Ascending aorta (tissue), 2 donors: ENCODE measurements at regions of chr12 and their contacts with region 1.

Region 1: DNA sequence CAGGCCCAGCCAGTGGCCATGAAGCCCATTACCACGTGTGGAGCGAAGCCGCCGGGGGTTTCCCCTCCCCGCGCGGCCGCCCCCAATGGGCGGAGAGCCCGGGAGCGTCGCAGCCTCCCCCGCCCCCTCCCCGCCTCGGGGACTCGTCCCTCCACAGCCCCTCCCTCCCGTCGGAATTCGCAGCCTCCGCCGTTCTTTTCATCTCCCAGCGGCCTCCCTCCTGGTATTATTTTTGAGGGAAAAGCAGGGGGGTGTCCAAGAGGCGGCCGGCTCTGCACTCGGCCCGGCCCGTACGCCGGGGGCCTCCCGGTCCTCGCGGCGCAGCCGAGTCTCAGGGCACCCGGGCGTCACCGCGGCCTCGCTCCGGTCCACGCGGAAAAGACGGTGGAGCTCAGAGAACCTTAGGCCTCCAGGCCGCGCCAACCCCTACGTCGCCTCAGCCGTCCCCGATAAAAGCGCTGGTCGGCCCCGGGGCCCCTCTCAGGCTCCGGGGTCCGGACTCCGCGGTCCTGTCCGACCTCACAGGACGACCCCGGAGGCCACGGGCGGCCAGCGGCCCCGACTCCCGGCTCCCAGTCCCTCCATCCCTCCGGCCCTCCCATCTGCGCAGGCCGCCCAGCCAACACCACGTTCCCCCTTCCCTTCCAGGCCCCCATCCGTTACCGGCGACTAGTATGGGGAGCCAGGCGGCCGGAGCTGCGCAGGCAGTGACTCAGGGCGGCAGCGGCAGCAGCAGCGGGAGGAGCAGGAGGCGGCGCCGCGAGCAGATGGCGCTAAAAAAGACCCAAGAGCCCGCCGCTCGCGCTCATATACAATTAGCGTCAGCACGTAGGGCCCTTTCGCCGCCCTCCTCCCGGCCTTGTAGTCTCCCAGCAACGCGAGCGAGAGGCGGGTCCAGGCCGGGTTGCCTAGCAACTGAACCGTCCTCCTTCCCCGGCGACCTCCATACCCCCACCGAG is at the start of gene NAP1L1:
- DNase-seq: peak; percentile 92 to 99
- H3K4me3 ChIP-seq: peak within 1 kb of the TSS; percentile 71 to 77
- H3K27ac ChIP-seq: peak within 1 kb of the TSS; percentile 99
- H3K4me1 ChIP-seq: peaks cover 7 to 18% of the 10 kb centered on the region in 2 donors
- H3K27me3 ChIP-seq: no peaks in the 10 kb centered on the region
- CTCF ChIP-seq: no peak
- total RNA-seq, gene NAP1L1: 116 TPM

Region 2: DNA sequence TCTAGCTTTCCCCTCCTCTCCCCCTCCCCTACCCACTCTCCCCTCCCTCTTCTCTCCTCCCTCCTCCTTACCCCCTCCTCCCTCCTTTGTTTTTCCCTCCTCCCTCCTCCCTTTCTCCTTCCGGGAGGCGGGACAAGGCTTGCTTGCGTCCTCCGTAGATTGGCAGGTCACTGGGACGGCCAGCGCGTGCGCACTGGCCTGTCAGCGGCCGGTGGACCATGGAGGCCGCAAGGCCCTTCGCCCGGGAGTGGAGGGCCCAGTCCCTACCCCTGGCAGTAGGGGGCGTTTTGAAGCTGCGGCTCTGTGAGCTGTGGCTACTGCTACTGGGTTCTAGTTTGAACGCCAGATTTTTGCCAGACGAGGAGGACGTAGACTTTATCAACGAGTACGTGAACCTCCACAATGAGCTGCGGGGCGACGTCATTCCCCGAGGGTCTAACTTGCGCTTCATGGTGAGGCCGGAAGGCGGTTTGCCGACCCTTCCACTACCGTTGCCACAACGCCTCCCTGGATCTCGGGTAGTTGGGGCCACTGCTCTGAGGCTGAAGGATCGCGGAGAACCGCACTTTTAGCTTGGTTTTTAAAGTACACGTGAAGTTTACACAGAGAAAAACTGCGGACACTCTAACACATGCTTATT is 693.2 kb before region 1 on chr12 and contains the start of gene GLIPR1L2:
- intact Hi-C with region 1: loop called (anchors 5 kb)
- DNase-seq: peak; percentile 89 to 98
- H3K4me3 ChIP-seq: peak within 1 kb of the TSS; percentile 63 to 76
- H3K27ac ChIP-seq: peak within 1 kb of the TSS; percentile 95 to 97
- H3K4me1 ChIP-seq: peaks cover 0 to 8% of the 10 kb centered on the region in 2 donors
- H3K27me3 ChIP-seq: no peaks in the 10 kb centered on the region
- CTCF ChIP-seq: peak; percentile 76 to 84 (median 79)
- total RNA-seq, gene GLIPR1L2: not detected

Region 3: DNA sequence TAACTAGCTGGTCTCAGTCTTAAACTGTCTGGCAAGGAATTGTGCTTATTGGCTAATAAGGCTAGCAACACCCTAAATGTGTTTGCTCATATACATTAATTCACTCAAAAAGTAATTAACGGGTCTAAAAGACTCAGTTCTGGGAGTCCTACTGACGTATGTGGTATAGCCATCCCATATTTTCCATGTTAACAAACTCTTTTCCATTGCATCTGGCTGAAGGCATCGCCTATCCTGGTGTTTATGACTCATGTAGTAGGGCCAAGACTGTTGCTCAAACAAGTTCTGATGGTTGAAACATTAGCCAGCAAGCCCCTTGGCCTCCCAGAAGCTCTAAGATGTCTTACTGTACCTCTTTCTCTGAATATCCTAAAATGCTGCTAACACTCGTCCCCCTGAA is 151.1 kb before region 1 on chr12:
- intact Hi-C with region 1: no loop called
- DNase-seq: no peak
- H3K4me3 ChIP-seq: no peak overlapping the region
- H3K27ac ChIP-seq: no peak overlapping the region
- H3K4me1 ChIP-seq: peaks cover 0 to 5% of the 10 kb centered on the region in 2 donors
- H3K27me3 ChIP-seq: no peaks in the 10 kb centered on the region
- CTCF ChIP-seq: no peak

Region 4: DNA sequence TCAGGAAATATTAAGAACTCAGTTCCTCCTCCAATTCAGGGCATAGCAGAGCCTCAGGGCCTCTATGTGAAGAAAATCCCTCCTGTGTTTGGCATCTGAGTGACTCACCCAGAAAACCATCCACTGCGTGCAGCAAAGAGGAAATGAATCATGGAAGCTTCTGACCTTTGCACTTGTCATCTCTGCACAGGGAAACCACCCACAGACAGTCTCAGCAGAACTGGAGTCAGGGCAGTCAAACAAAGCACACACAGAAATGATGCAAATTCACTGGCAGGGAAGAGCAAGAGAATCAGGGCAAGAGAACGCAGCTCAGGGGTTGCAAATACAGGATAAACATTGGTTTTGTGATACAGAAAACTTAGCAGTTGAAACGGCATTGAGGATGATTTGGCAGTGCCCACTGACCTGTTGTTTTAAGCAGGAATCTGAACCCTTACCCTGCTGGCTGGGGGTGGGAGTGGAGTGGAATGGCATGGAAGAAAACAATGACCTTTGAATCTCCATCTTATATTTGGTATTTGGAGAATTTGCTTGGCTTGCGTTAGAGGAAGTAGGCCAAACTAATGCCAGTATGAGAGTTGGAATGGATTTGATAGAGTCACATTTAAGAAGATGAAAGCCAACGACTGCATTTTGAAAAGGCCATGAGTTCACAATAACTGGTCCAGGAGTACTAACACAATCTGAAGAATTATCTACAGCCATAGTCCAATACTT is 106.1 kb before region 1 on chr12:
- intact Hi-C with region 1: loop called (anchors 5 kb)
- DNase-seq: peak; percentile 59 to 93
- H3K4me3 ChIP-seq: no peak overlapping the region
- H3K27ac ChIP-seq: peak overlapping the region; percentile 86 to 91
- H3K4me1 ChIP-seq: peaks cover 13 to 27% of the 10 kb centered on the region in 2 donors
- H3K27me3 ChIP-seq: no peaks in the 10 kb centered on the region
- CTCF ChIP-seq: no peak

Region 5: DNA sequence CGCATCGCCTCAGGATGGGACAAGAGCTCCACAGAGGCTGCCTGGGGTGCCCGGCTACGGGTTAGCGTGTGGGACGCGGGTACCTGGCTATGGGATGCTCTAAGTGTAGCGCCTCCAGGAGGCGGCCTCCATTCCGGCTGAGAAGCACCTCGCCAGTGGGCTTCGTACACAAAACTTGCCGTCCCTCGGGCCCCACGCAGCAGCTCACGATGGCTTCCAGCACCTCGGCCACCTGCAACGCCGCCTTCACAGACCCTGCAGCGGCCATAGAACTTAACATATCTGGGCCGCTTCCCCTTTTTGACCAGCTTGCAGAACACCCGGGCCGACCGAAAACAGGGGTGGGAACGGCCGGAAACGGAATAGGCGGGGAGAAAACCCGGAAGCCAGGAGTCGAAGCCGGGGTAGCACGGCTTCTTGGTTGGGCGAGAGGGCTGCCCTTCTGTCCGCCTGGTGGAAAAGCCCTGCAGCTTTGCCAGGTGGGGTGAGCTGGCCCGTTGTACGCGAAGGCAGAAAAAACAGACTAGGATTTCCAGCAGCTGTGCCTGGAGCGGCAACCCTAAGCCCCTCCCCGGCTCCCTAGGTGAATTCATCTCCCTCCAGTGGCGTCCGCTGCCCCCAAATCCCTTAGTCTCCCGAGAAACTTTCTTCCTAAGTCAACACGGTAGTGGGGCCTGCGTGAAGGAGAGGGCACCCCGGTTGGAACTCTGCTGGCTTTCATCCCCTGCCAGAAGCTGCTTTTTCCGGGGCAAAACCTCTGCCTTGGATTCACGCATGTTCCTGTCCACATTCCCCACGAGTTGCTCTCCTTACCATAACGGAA is 264.1 kb after region 1 on chr12 and contains the start of gene BBS10:
- intact Hi-C with region 1: loop called (anchors 2 kb)
- DNase-seq: peak; percentile 65 to 94
- H3K4me3 ChIP-seq: peak within 1 kb of the TSS; percentile 70 to 85
- H3K27ac ChIP-seq: peak within 1 kb of the TSS; percentile 84 to 86
- H3K4me1 ChIP-seq: peaks cover 6 to 22% of the 10 kb centered on the region in 2 donors
- H3K27me3 ChIP-seq: no peaks in the 10 kb centered on the region
- CTCF ChIP-seq: peak; percentile 12 to 48 (median 17)
- total RNA-seq, gene BBS10: 3.8 TPM

Region 6: DNA sequence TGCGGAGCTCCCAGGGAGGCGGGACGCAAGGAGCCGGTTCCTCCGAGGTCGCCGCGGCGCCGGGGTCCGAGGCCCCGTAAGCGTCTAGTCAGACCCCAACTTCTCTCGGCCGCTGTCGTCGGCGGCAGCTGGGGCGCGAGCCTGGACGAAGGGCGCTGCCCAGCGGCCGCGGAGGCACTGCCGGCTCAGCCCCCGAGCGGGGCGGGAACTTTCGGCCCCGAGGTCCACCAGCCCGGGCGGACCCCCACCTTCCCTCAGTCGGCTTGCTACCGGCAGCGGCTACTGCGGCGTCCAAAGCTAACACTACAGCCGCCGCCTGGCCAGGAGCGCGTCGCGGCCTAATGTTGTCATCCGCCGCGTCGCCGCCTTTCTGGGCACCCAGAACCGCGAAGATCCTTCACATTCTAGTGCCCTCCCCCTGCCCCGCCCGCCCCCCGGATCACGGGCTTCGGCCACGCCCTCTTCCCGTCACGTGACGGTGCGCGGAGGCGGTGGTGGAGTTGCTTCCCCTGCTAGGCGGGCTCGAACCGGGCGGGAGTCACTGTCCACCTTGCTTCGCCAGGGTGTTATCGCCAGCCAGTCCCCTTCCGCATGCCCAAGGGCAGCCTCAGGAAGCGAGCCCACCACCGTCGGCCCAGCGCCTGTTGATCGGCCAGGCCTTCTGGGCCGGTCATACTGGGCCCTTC is 475.4 kb after region 1 on chr12 and contains the start of gene OSBPL8:
- intact Hi-C with region 1: loop called (anchors 2 kb)
- DNase-seq: peak; percentile 93 to 99
- H3K4me3 ChIP-seq: peak within 1 kb of the TSS; percentile 71 to 89
- H3K27ac ChIP-seq: peak within 1 kb of the TSS; percentile 91 to 95
- H3K4me1 ChIP-seq: peaks cover 4 to 9% of the 10 kb centered on the region in 2 donors
- H3K27me3 ChIP-seq: no peaks in the 10 kb centered on the region
- CTCF ChIP-seq: peak; percentile 9 to 44 (median 16)
- total RNA-seq, gene OSBPL8: 18.6 TPM

Region 7: GRCh38 chr12:76878899-76879709 is 794.9 kb after region 1 on chr12 and contains the start of gene CSRP2:
- intact Hi-C with region 1: loop called (anchors 2 kb)
- DNase-seq: peak; percentile 83 to 96
- H3K4me3 ChIP-seq: peak within 1 kb of the TSS; percentile 70 to 76
- H3K27ac ChIP-seq: peak within 1 kb of the TSS; percentile 94 to 98
- H3K4me1 ChIP-seq: peaks cover 0 to 33% of the 10 kb centered on the region in 2 donors
- H3K27me3 ChIP-seq: no peaks in the 10 kb centered on the region
- CTCF ChIP-seq: peak; percentile 18 to 36 (median 30)
- total RNA-seq, gene CSRP2: 59.7 TPM